ENCODE measurements at regions of chr1 and their contacts with region 1.

Region 1: GRCh38 chr1:70978623-70979022 is 69.0 kb downstream of the PTGER3 start:
- DNase-seq: no peak
- CTCF ChIP-seq: no peak

Region 2: DNA sequence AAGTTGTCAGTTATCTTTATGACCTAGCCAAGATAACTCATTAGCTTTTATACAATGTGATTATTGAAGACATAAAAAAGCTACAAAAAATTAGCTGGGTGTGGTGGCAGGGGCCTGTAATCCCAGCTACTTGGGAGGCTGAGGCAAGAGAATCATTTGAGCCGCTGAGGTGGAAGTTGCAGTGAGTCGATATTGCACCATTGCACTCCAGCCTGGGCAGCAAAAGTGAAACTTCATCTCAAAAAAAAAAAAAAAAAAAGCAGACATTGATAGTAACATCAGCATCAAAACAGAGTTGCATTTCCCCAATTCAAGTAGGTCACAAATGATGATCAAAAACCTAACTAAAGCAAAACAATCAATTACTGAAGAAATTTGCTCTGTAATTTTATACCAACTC is 122.4 kb before region 1 on chr1:
- CTCF ChIA-PET with region 1: no interaction called
- POLR2A ChIA-PET with region 1: no interaction called
- DNase-seq: no peak
- CTCF ChIP-seq: no peak

Region 3: DNA sequence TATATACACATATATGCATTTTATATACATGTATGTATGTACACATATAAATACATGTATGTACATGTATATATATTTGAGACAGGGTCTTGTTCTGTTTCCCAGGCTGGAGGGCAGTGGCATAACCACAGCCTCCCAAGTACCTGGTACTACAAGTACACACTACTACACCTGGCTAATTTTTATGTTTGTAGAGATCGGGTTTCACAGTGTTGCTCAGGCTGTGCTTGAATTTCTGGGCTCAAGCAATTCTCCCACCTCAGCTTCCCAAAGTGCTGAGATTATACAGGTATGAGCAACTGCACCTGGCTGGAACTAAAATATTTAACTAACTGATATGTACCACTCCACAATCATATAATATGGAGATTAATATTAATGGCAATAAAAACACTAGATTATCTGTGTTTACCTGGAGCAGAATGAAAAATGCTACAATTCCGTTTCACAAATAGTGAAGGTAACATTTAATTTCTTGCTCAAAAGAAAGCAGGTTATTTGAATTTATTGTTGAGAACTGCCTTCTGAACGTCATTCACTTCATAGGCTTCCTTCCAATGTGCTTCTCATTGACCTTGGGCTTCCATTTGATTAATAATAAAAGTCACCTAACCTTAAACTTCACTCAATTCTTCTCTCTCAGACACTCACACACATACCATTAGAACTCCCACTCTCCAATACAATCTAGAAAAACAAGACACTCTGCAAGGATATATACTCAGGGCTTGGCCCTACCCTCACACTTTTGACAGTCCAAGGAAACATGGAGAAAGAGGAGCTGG is 12.0 kb after region 1 on chr1:
- CTCF ChIA-PET with region 1: interaction called, 17 read pairs
- POLR2A ChIA-PET with region 1: no interaction called
- DNase-seq: no peak
- CTCF ChIP-seq: no peak

Region 4: GRCh38 chr1:71135571-71135970 is 156.9 kb after region 1 on chr1:
- CTCF ChIA-PET with region 1: no interaction called
- POLR2A ChIA-PET with region 1: no interaction called
- DNase-seq: no peak
- CTCF ChIP-seq: no peak